ENCODE measurements at regions of chr16 and their contacts with region 1.

Region 1: DNA sequence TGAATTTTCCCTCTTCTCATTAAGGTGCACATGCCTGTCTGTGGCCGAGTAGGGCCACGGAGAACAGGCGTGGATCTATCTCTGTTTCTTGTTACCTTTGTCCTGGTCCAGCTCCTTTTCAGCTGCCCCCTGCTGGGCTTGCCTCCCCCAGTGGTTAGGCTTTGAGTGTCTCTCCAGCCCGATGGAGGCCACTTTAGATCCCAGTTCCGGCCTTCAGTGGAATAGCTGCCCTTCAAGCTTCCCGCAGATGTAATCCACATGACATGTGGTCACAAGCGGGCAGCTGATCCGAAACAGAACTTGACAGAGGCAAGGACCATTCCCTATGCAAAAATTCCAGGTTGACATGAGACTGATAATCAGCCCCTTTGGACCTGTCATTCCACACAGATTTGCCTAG is 40.7 kb upstream of the AQP8 start:
- DNase-seq: no peak
- H3K4me3 ChIP-seq: no peak overlapping the region
- H3K27ac ChIP-seq: no peak overlapping the region
- H3K4me1 ChIP-seq: no peaks in the 10 kb centered on the region
- H3K27me3 ChIP-seq: no peaks in the 10 kb centered on the region
- CTCF ChIP-seq: no peak

Region 2: DNA sequence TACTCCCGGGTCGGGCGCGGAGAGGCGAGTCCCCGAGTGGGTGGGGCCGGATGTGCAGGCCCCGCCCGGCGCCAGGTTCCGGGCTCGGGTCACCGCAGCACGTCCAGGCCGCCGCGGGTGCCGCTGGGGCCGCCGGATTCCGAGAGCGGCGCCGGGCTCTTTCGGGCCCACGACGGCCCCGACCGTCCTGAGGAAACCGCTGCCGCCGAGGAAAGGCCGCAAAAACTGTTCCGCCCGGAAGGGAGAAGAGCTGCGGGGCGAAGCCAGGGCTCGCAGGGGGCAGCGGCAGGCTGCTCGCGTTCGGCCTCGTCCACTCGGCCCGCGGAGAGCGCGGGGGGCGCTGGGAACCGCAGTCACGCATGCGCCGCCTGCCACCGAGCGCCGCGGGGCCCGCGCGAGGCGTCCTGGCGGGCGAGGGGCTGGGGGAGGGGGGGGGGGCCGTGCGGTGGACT is 81.4 kb after region 1 on chr16 and contains the start of gene ZKSCAN2:
- CTCF ChIA-PET with region 1: no interaction called
- POLR2A ChIA-PET with region 1: interaction called, 11 read pairs
- intact Hi-C with region 1: no loop called
- DNase-seq: peak; percentile 88
- H3K4me3 ChIP-seq: peak within 1 kb of the TSS; percentile 91
- H3K27ac ChIP-seq: peak within 1 kb of the TSS; percentile 98
- H3K4me1 ChIP-seq: peaks cover 10% of the 10 kb centered on the region
- H3K27me3 ChIP-seq: no peaks in the 10 kb centered on the region
- CTCF ChIP-seq: no peak
- total RNA-seq, gene ZKSCAN2: 16.4 and 17.0 TPM in 2 replicates